ENCODE measurements at regions of chr11 and their contacts with region 1.

Region 1: GRCh38 chr11:116499396-116500003 is 273.3 kb downstream of the BUD13 start:
- DNase-seq: peak; percentile 58 to 80 (median 66)
- ATAC-seq: peak in 3 of 4 donors; percentile 42 to 71 (median 62)
- H3K4me3 ChIP-seq: no peak overlapping the region
- H3K27ac ChIP-seq: no peak overlapping the region
- H3K4me1 ChIP-seq: peaks cover 0 to 12% (median 0%) of the 10 kb centered on the region in 12 donors
- H3K27me3 ChIP-seq: peaks cover 0 to 45% (median 12%) of the 10 kb centered on the region in 9 donors
- CTCF ChIP-seq: peak; percentile 45 to 71 (median 53)
- POLR2A ChIP-seq: no peak

Region 2: GRCh38 chr11:116454020-116454645 is 45.4 kb before region 1 on chr11:
- intact Hi-C with region 1: loop called in 2 of 10 experiments (anchors 5 kb)
- DNase-seq: peak in 3 of 5 donors; percentile 28 to 44 (median 39)
- ATAC-seq: peak in 3 of 4 donors; percentile 58 to 64 (median 59)
- H3K4me3 ChIP-seq: no peak overlapping the region
- H3K27ac ChIP-seq: no peak overlapping the region
- H3K4me1 ChIP-seq: no peaks in the 10 kb centered on the region
- H3K27me3 ChIP-seq: peaks cover 0 to under 1% (median 0%) of the 10 kb centered on the region in 9 donors
- CTCF ChIP-seq: peak; percentile 29 to 64 (median 48)
- POLR2A ChIP-seq: no peak